Activated T-helper 2 cell treated with anti-CD3 and anti-CD28 coated beads, Interferon-gamma antibody, Interleukin-2, Interleukin-4, amounts not matched to agents 10 μg/mL and 5 μg/mL and 100 μg/mL, durations not matched to agents 14 hours and 24 hours and 36 hours (primary cell): ENCODE measurements at regions of chr6 and their contacts with region 1.

Region 1: GRCh38 chr6:109187399-109188114 is 92.2 kb downstream of the CEP57L1 start:
- DNase-seq: peak; percentile 20
- H3K4me3 Mint-ChIP-seq: no peak overlapping the region
- H3K27ac Mint-ChIP-seq: no peak overlapping the region
- H3K4me1 Mint-ChIP-seq: peaks cover 11% of the 10 kb centered on the region
- H3K27me3 Mint-ChIP-seq: peaks cover 30% of the 10 kb centered on the region

Region 2: GRCh38 chr6:109103942-109104341 is 83.6 kb before region 1 on chr6:
- intact Hi-C with region 1: loop called (anchors 5 kb)
- DNase-seq: no peak
- H3K4me3 Mint-ChIP-seq: no peak overlapping the region
- H3K27ac Mint-ChIP-seq: peak overlapping the region; percentile 60
- H3K4me1 Mint-ChIP-seq: peaks cover 17% of the 10 kb centered on the region
- H3K27me3 Mint-ChIP-seq: no peaks in the 10 kb centered on the region

Region 3: DNA sequence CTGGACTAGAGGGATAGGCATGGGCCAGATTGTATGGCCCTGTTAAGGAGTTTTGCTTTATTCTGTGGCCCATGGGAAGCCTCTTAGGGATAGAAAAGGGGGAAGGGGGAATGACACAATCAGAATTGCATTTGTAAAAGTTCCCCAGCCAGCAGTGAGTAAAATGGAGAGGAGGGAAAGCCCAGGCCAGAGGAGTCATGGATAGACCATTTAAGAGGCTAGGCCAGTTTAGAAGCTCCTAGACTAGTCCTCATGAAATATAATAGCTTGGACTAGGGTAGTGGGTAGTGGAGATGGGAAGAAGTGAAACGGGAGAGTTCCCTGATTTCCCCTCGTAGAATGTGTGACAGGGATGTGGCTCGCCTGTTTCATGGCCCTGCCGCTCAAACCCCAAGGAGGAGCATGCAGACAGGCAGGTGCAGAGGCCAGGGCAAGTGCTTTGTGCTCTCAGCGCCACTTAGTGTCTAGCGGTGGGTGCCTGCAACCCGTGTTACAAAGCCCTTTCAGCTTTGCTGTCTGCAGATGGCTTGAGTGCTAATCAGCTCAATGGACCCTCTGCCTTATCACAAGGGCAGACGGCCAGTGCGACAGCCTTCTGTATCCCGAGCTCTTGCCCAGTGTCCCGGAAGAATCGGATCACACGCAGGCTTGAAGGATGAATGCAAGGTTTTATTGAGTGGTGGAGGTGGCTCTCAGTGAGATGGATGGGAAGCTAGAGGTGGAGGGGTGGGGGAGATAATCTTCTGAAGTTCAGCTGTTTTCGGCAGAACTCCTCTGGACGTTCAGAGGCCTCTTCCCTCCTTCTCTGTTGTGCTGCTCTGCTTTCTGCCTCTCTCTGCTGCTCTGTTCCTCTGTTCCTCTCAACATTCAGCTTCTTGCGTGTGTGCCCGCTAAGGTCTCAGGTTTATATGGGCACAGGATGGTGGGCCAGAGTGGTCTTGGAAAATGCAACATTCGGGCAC is 48.8 kb after region 1 on chr6:
- intact Hi-C with region 1: loop called (anchors 1 kb)
- DNase-seq: peak; percentile 42
- H3K4me3 Mint-ChIP-seq: peak overlapping the region; percentile 59
- H3K27ac Mint-ChIP-seq: peak overlapping the region; percentile 79
- H3K4me1 Mint-ChIP-seq: peaks cover 18% of the 10 kb centered on the region
- H3K27me3 Mint-ChIP-seq: no peaks in the 10 kb centered on the region

Region 4: DNA sequence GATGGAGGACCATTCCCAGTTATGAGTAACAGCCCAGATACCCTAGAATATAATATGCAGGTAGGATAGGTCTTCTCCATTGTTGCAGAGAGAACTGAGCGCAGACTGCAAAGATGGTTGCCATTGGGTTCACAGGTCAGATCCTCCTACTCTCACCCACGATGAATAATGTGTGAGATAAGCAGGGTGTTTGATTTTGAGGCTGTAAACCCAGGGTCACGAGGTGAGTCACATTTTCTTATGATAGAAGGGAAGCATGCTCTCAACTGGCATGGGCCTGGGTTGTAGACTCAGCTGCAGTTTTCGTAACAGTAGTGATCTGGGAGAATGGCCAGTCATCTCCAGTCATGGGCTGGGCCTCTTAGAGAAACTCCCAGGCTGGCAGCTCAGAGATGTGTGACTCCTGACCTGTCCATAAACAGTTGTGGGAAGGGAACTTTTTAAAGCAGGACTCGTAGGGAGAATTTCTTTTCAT is 120.5 kb after region 1 on chr6:
- intact Hi-C with region 1: loop called (anchors 10 kb)
- DNase-seq: no peak
- H3K4me3 Mint-ChIP-seq: no peak overlapping the region
- H3K27ac Mint-ChIP-seq: peak overlapping the region; percentile 76
- H3K4me1 Mint-ChIP-seq: peaks cover 35% of the 10 kb centered on the region
- H3K27me3 Mint-ChIP-seq: no peaks in the 10 kb centered on the region

Region 5: DNA sequence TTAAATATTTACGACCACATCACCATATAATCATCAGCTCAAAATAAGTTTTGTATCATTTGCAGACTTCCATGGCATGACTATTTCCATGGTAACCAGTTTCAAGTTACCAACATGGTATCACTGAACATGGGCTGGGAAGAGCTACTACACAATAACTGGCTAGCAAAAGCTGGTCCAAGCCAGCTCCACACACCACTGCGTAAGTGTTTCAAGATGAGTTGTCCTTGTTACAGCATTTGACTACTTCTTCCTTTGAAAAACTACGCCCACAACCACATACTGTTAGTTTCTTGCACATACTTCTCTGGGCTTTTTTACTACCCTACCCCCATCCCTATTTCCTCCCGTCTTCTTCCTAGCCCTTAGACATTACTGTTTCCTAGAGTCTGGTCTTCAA is 186.2 kb after region 1 on chr6:
- intact Hi-C with region 1: loop called (anchors 2 kb)
- DNase-seq: peak; percentile 43
- H3K4me3 Mint-ChIP-seq: peak overlapping the region; percentile 75
- H3K27ac Mint-ChIP-seq: peak overlapping the region; percentile 89
- H3K4me1 Mint-ChIP-seq: peaks cover 71% of the 10 kb centered on the region
- H3K27me3 Mint-ChIP-seq: no peaks in the 10 kb centered on the region

Region 6: GRCh38 chr6:109440331-109441068 is 252.9 kb after region 1 on chr6 and contains the starts of genes PPIL6 and SMPD2:
- intact Hi-C with region 1: loop called (anchors 5 kb)
- DNase-seq: peak; percentile 72
- H3K4me3 Mint-ChIP-seq: peak within 1 kb of the TSS; percentile 92
- H3K27ac Mint-ChIP-seq: peak within 1 kb of the TSS; percentile 92
- H3K4me1 Mint-ChIP-seq: peaks cover 17% of the 10 kb centered on the region
- H3K27me3 Mint-ChIP-seq: no peaks in the 10 kb centered on the region
- total RNA-seq, gene PPIL6: 0.32 TPM in 1 of 2 replicates, not detected in the other
- total RNA-seq, gene SMPD2: 14.7 and 17.5 TPM in 2 replicates